Spleen (tissue), 13 donors: ENCODE measurements at regions of chr3 and their contacts with region 1.

Region 1: DNA sequence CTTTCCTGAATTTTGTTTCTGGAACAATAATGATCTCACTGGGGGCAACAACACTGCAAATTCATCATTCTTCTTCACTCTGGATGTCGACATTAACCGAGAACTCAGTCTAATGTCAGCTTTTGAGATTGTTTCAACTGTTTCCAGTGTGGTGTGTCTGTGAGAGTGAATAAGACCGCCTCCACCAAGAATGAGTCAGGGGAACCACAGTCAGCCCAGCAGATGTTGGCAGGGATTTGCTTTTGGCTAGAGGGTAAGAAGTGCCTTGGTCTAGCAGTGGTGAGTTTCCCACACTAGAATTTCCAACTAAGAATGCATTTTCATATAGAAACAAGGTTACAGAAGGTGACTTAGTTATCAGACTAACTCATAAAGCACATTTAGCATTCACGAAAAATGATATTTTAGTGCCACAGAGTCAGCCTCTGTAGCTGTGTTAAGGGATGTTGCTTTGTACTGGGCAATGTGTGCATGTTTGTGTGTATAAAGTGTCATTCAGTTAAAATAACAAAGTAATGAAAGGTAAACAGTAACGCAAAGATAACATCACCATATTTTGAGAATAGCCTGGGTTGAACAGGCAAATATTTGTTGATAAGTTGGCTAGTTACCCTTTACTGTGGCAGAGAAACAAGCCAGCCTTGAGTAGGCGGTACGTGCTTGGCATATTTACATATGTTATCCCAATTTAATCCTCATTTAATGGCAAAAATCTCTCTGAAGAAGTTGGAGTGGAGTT is 33.8 kb downstream of the DRD3 start:
- DNase-seq: no peak
- H3K4me3 ChIP-seq: no peak overlapping the region
- H3K27ac ChIP-seq: no peak overlapping the region
- H3K4me1 ChIP-seq: no peaks in the 10 kb centered on the region
- H3K27me3 ChIP-seq: no peaks in the 10 kb centered on the region
- CTCF ChIP-seq: no peak
- POLR2A ChIP-seq: no peak

Region 2: GRCh38 chr3:114022153-114022802 is 122.8 kb before region 1 on chr3:
- intact Hi-C with region 1: no loop called
- DNase-seq: no peak
- H3K4me3 ChIP-seq: no peak overlapping the region
- H3K27ac ChIP-seq: no peak overlapping the region
- H3K4me1 ChIP-seq: no peaks in the 10 kb centered on the region
- H3K27me3 ChIP-seq: no peaks in the 10 kb centered on the region
- CTCF ChIP-seq: no peak
- POLR2A ChIP-seq: no peak

Region 3: DNA sequence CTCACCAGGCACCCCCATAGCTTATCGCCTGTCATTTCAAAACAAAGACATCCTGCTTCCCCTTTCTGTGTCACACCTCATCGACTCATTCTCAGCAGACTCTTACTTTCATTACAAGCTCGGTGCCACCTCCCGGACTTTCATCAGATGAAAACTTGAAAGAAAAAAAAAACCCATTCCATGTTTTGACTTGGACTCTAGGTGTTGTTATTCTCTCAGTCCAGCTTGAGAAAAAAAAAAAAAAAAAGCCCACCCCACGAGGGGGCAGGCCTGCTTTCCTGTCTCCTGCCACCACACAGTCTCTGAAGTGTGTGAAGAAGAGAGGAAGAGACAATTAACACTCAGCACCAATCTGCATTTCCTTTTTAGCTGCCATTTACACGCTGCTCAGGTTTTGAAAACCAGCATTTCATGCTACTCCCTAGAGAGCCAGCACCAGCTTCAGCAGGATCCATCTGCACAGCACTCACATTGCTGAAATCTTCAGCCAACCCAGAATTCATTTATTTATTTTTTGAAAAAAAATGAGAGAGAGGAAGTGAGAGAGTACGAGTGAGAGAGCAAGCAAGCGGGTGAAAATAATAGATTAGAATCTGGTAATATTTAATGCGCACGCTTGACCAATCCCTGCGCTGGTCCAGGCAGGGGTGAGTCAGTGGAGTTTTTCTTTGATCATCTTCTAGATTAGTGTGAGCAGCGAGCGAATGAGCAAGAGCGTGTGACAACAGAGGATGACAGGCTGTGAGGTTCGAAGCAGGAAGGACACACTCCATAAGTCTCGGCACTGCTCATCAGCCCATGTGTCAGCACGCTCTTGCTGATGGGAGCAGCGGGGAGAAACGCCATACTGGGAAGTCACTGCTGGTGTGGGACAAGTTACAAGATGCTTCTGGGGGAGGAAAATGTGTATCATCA is 68.8 kb after region 1 on chr3:
- intact Hi-C with region 1: no loop called
- DNase-seq: peak; percentile 86
- H3K4me3 ChIP-seq: peak overlapping the region in 6 of 8 donors; percentile 20 to 62 (median 24)
- H3K27ac ChIP-seq: peak overlapping the region; percentile 87 to 96 (median 92)
- H3K4me1 ChIP-seq: peaks cover 19 to 68% (median 33%) of the 10 kb centered on the region in 6 donors
- H3K27me3 ChIP-seq: no peaks in the 10 kb centered on the region
- CTCF ChIP-seq: peak in 6 of 11 experiments; percentile 15 to 37 (median 21)
- POLR2A ChIP-seq: peak in 2 of 3 donors; percentile 69 to 74

Region 4: DNA sequence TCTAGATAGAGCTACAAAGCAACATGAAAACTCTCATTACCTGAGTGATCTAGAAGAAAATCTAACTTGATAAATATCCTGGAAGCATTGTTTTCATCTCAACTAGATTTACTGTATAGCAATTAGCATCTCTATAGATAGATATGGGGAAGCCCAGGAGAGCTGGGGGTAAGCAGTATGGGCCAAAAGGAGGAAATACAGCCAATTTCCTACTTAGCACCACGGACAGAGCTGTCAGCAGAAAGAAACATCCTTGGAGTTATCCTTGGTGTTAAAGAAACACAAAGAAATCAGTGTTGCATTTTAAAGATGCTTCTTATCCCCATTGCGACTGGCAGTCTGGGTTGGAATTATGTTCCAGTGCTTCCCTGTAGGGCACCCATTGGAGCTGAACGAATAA is 275.0 kb after region 1 on chr3:
- intact Hi-C with region 1: loop called (anchors 5 kb)
- DNase-seq: no peak
- H3K4me3 ChIP-seq: no peak overlapping the region
- H3K27ac ChIP-seq: no peak overlapping the region
- H3K4me1 ChIP-seq: peaks cover 0 to 25% (median 12%) of the 10 kb centered on the region in 6 donors
- H3K27me3 ChIP-seq: no peaks in the 10 kb centered on the region
- CTCF ChIP-seq: no peak
- POLR2A ChIP-seq: no peak